ENCODE measurements at regions of chr2 and their contacts with region 1.

Region 1: GRCh38 chr2:234425619-234426603 is 71.0 kb downstream of the ARL4C start:
- DNase-seq: peak; percentile 88
- H3K4me3 Mint-ChIP-seq: peak overlapping the region; percentile 57
- H3K27ac Mint-ChIP-seq: peak overlapping the region; percentile 99
- H3K4me1 Mint-ChIP-seq: peaks cover 85% of the 10 kb centered on the region
- H3K27me3 Mint-ChIP-seq: no peaks in the 10 kb centered on the region

Region 2: GRCh38 chr2:234308813-234309195 is 117.1 kb before region 1 on chr2:
- CTCF ChIA-PET with region 1: no interaction called
- POLR2A ChIA-PET with region 1: interaction called, 22 read pairs
- DNase-seq: peak; percentile 83
- H3K4me3 Mint-ChIP-seq: peak overlapping the region; percentile 29
- H3K27ac Mint-ChIP-seq: peak overlapping the region; percentile 97
- H3K4me1 Mint-ChIP-seq: peaks cover 64% of the 10 kb centered on the region
- H3K27me3 Mint-ChIP-seq: no peaks in the 10 kb centered on the region

Region 3: DNA sequence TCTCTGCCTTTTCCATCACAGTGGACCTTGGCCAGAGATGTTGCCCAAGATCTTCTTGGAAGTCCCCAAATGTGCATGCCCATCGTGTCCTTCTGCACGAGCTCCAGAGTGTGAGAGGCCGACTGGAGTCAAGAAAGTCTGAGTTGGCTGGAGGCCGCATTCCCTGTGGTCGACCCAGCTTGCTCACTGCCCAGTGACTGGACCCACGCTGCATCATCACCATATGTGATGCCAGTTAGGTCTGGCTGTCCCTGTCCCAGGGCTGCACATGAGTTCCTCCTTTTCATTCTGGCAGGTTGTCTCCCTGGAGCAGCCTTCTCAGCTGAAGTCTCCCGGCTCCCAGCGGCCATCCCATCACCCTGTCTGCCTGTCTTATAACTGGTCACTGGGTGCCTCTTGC is 22.8 kb before region 1 on chr2:
- CTCF ChIA-PET with region 1: no interaction called
- POLR2A ChIA-PET with region 1: interaction called, 54 read pairs
- DNase-seq: no peak
- H3K4me3 Mint-ChIP-seq: no peak overlapping the region
- H3K27ac Mint-ChIP-seq: peak overlapping the region; percentile 6
- H3K4me1 Mint-ChIP-seq: peaks cover 73% of the 10 kb centered on the region
- H3K27me3 Mint-ChIP-seq: no peaks in the 10 kb centered on the region

Region 4: GRCh38 chr2:234446404-234447076 is 20.6 kb after region 1 on chr2:
- CTCF ChIA-PET with region 1: interaction called, 50 read pairs
- POLR2A ChIA-PET with region 1: interaction called, 410 read pairs
- DNase-seq: peak; percentile 93
- H3K4me3 Mint-ChIP-seq: peak overlapping the region; percentile 55
- H3K27ac Mint-ChIP-seq: peak overlapping the region; percentile 99
- H3K4me1 Mint-ChIP-seq: peaks cover 82% of the 10 kb centered on the region
- H3K27me3 Mint-ChIP-seq: no peaks in the 10 kb centered on the region

Region 5: DNA sequence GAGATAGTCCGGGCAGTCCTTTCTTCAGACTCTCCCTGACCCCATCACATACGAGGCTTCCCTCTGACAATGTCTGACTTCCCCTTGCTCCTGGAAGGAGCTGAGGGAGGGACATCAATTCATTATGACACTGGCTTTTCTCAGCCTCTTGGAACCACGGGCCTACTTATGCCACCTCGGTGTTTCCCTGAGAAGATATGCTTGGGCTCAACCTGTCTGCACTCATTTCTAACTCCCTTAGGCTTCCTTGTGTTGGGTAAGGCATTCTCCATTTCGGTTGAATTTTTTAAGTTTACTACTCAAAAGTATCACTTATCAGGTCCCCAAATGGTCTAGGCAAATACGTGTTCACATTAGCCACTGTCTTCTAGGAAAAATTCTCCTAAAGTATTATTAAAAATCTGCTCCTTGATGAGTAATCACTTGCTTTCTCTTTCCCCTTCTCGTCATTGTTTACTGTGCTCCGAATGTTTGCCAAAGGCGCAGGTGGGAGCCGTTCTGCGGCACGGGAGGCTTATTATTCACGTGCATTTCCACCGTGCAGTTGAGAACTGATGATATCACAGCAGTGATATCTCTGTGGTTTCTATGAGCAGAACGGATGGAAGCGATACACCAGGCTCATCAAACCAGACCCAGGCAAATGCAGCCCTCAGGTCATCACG is 37.8 kb after region 1 on chr2:
- CTCF ChIA-PET with region 1: interaction called, 3 read pairs
- POLR2A ChIA-PET with region 1: interaction called, 43 read pairs
- DNase-seq: peak; percentile 78
- H3K4me3 Mint-ChIP-seq: peak overlapping the region; percentile 58
- H3K27ac Mint-ChIP-seq: peak overlapping the region; percentile 86
- H3K4me1 Mint-ChIP-seq: peaks cover 61% of the 10 kb centered on the region
- H3K27me3 Mint-ChIP-seq: no peaks in the 10 kb centered on the region

Region 6: GRCh38 chr2:234483568-234484251 is 57.8 kb after region 1 on chr2:
- CTCF ChIA-PET with region 1: interaction called, 10 read pairs
- POLR2A ChIA-PET with region 1: interaction called, 229 read pairs
- DNase-seq: peak; percentile 90
- H3K4me3 Mint-ChIP-seq: peak overlapping the region; percentile 59
- H3K27ac Mint-ChIP-seq: peak overlapping the region; percentile 88
- H3K4me1 Mint-ChIP-seq: peaks cover 93% of the 10 kb centered on the region
- H3K27me3 Mint-ChIP-seq: no peaks in the 10 kb centered on the region